GM10248 (cell line): ENCODE measurements at regions of chr16 and their contacts with region 1.

Region 1: DNA sequence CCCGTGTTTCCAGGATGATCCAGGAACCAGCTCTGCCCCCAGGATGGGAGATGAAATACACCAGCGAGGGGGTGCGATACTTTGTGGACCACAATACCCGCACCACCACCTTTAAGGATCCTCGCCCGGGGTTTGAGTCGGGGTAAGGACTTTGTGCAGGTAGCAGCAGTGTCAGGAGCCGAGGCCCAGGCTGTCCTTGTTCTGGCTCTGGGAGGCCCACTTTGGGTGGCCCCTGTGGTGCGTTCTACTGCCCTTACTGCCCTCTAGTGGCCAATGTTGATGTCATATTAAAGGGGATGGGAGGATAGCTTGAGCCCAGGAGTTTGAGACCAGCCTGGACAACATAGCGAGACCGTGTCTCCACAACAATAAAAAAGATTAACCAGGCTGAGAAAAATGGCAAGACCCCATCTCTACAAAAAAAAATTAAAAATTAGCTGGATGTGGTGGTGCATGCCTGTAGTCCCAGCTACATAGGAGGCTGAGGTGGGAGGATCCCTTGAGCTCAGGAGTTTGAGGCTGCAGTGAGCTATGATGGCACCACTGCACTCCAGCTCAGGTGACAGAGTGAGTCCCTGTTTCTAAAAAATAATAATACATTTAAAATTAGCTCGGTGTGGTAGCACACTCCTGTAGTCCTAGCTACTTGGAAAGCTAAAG is 20.9 kb upstream of the CLEC18A start:
- DNase-seq: peak; percentile 85
- CTCF ChIP-seq: peak; percentile 72

Region 2: DNA sequence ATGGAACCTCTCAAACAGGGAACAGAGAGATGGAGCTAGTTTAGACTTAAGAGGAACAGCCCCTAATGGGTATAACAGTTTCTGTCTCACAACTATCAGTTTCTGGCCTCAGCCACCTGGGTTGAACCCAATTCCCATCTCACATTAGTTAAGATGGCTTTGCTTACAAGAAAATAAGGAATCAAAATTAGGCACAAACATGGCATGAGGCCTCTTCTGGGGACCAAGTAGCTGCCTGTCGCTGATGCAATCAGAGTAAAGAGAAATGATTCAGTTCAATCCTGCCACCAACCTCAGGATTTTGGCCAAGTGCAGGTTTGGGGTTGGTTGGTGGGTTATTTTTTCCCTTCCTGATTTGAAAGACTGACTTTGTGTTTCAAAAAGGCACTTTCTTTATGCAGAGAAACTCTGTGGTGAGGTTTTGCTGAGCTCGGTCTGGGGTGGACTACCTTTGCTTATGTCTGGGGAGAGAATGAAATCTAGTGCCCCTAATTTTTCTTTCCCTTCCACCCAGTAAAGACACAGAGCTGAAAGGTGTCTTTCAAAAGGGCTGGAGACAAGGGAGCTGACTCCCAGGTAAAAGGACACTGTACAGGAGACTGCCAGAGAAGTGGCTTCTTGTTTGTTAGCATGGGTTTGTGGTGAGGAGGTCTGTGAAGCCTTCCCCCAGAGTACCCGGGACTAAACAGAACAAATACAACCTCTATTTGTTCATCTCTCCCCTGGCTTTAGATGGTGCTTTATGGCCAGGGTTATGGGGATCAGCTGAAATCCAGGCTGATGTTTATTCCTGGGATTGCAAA is 409.2 kb before region 1 on chr16:
- CTCF ChIA-PET with region 1: no interaction called
- POLR2A ChIA-PET with region 1: no interaction called
- DNase-seq: peak; percentile 36
- CTCF ChIP-seq: no peak

Region 3: GRCh38 chr16:69709456-69710084 is 220.7 kb before region 1 on chr16:
- CTCF ChIA-PET with region 1: interaction called, 17 read pairs
- POLR2A ChIA-PET with region 1: no interaction called
- DNase-seq: peak; percentile 54
- CTCF ChIP-seq: peak; percentile 61

Region 4: GRCh38 chr16:69796351-69797118 is 133.7 kb before region 1 on chr16:
- CTCF ChIA-PET with region 1: interaction called, 98 read pairs
- POLR2A ChIA-PET with region 1: no interaction called
- DNase-seq: peak; percentile 58
- CTCF ChIP-seq: peak; percentile 77

Region 5: GRCh38 chr16:69906838-69907401 is 23.3 kb before region 1 on chr16:
- CTCF ChIA-PET with region 1: interaction called, 15 read pairs
- POLR2A ChIA-PET with region 1: no interaction called
- DNase-seq: no peak
- CTCF ChIP-seq: no peak

Region 6: DNA sequence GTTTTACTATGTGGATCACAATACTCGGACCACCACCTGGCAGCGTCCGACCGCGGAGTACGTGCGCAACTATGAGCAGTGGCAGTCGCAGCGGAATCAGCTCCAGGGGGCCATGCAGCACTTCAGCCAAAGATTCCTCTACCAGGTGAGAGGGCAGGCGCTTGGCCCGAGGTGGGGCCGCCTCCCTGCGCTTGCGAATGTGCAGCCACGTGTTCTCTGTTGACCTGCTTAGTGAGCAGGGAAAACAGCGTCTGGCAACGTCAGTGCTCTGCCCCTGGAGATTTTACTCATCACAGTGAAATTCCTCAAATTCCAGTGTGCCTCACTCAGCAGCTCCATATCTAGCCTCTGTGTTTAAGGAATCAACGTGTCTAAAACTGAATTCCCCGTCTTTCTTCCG is 12.5 kb before region 1 on chr16:
- CTCF ChIA-PET with region 1: interaction called, 26 read pairs
- POLR2A ChIA-PET with region 1: no interaction called
- DNase-seq: no peak
- CTCF ChIP-seq: no peak

Region 7: DNA sequence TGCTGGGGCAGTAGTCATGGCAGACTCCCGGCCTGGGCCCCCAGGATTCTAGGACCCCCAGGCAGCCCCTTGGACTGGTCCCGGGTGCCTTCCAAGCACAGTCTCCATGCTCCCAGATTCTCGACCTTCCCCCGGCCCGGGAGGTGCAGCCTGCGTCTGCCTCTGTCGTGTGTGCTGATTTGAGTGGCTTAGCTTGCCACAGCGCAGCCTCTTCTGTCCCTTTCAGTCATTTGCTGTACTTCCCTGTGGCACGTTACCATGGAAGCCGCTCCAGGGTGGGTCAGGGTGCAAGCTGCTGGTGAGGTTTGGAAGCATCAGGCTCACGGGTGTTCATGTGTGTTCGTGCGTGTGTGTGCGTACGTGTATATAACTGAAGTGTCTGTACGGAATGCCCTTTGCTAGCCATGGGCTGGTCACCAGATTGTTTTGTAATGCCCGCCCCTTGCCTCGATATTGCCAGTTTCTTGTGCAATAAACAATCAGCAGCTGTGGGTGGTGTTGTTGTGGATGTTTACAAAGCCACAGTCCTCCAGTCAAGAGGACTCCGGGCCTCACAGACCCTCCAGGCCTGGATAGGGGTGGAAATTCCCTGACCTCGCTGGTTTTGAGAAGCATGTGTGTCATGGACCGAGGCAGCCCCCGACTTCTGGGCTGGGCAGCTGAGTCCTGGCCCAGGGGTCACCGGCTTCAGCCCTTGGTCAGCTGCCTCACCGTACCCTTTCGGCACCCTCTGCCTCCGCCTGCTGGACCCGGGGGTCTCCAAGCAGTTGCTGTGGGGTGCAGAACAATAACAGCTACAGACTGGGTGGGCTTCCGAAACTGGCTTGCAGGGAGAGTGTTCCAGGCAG is 11.2 kb after region 1 on chr16:
- CTCF ChIA-PET with region 1: interaction called, 31 read pairs
- POLR2A ChIA-PET with region 1: no interaction called
- DNase-seq: no peak
- CTCF ChIP-seq: no peak